Aorta (tissue), 5 donors: ENCODE measurements at regions of chr2 and their contacts with region 1.

Region 1: GRCh38 chr2:28751252-28751955 is at the start of gene PPP1CB:
- DNase-seq: peak; percentile 98 to 99
- ATAC-seq: peak; percentile 96
- H3K4me3 ChIP-seq: peak within 1 kb of the TSS; percentile 87 to 94
- H3K27ac ChIP-seq: peak within 1 kb of the TSS; percentile 99
- H3K4me1 ChIP-seq: peaks cover 0 to 6% of the 10 kb centered on the region in 2 donors
- H3K27me3 ChIP-seq: no peaks in the 10 kb centered on the region
- total RNA-seq, gene PPP1CB: 386 to 484 TPM

Region 2: DNA sequence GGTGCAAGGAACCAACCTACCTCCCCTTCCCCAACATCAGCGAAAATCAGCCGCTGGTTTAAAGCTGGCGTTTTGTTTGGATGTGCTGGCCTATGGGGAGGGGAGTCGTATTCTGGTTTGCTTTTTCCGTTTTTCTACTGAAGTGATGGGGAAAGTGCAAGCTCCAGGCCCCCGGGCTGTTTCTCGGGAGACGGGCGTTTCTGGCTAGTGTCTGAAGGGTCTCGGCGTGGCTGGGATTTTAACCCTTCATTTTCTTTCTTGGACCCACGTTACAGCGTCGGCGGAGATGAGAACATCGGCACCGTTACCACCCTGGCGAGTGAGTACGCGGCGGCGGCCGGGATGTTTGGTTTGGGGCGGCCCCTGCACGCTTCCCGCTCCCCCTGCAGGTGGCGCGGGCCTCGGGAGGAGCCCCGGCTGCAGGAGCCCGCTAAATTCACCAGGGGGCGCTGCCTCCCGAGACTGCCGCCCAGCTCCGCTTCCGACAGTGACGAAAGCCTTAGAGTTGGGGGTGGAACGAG is 184.8 kb before region 1 on chr2:
- intact Hi-C with region 1: loop called (anchors 2 to 5 kb)
- DNase-seq: peak; percentile 89 to 96
- ATAC-seq: peak; percentile 97
- H3K4me3 ChIP-seq: peak overlapping the region; percentile 52 to 86
- H3K27ac ChIP-seq: peak overlapping the region in 1 of 2 donors; percentile 52
- H3K4me1 ChIP-seq: no peaks in the 10 kb centered on the region
- H3K27me3 ChIP-seq: no peaks in the 10 kb centered on the region

Region 3: DNA sequence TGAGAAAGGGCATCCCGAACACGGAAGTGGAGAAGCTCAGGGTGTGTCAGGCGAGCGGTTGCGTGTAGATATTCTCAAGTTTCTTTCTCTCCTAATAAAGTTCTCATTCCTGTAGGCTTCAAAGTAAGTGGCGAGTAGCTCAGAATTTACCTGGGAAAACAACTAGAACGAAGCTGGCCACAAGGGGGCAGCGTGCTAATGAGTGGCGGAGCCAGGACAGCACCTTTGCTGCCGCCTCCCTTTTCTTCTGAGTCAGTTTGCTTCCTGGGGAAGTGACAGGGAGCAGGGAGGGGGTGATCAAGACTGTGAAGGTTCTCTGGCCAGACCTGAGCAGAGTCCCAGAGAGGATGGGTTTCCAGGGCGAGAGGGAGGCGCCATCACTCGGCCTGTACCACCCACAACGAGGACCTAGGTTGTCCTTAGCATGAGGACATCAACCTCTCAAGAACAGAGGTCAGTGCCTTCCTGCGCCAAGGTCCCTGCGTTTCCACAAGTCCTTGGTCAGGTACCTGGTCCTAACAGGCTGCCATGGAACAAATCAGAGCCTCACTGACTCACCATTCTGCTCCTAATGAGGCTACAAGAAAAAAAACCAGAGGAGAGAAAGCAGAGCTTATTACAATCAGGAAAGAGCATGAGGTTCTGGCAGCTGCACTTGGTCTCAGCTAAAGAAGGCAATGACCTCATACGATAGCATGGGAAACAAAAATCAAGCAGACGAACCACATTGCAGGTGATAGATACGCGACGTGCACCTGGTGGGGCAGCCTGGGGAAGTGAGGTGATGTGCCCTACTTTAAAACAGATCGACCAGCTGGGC is 156.9 kb before region 1 on chr2:
- intact Hi-C with region 1: loop called (anchors 2 to 5 kb)
- DNase-seq: peak; percentile 92 to 95
- ATAC-seq: peak; percentile 87
- H3K4me3 ChIP-seq: no peak overlapping the region
- H3K27ac ChIP-seq: peak overlapping the region; percentile 72 to 95
- H3K4me1 ChIP-seq: peaks cover 0 to 1% of the 10 kb centered on the region in 2 donors
- H3K27me3 ChIP-seq: no peaks in the 10 kb centered on the region

Region 4: DNA sequence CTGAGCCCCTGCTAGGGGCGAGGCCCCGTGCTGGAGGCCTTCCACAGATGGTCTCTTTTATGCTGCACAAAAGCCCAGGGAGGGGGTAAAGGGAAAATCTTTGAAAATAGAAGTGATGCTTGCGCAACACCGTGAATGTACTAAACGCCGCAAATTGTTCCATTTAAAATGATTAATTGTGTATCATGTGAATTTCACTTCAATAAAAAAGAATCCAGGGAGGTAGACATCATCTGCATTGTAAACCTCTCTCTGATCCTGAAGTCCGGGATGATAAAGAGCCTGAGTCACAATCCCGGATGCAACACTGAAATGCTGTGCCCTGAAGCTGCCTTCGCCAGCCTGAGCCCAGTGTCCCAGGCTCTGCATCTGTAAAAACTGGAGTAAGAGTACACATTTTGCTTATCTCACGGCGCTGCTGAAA is 107.5 kb before region 1 on chr2:
- intact Hi-C with region 1: loop called in 1 of 2 experiments (anchors 5 kb)
- DNase-seq: peak; percentile 46 to 64
- ATAC-seq: peak; percentile 25
- H3K4me3 ChIP-seq: no peak overlapping the region
- H3K27ac ChIP-seq: peak overlapping the region; percentile 90 to 96
- H3K4me1 ChIP-seq: peaks cover 5 to 11% of the 10 kb centered on the region in 2 donors
- H3K27me3 ChIP-seq: no peaks in the 10 kb centered on the region

Region 5: GRCh38 chr2:28736034-28736433 is 15.4 kb before region 1 on chr2:
- intact Hi-C with region 1: loop called in 1 of 2 experiments (anchors 2 kb)
- DNase-seq: peak; percentile 86 to 89
- ATAC-seq: peak; percentile 94
- H3K4me3 ChIP-seq: peak overlapping the region; percentile 80 to 99
- H3K27ac ChIP-seq: peak overlapping the region; percentile 90 to 93
- H3K4me1 ChIP-seq: peaks cover 0 to 7% of the 10 kb centered on the region in 2 donors
- H3K27me3 ChIP-seq: no peaks in the 10 kb centered on the region